ENCODE measurements at regions of chr18 and their contacts with region 1.

Region 1: DNA sequence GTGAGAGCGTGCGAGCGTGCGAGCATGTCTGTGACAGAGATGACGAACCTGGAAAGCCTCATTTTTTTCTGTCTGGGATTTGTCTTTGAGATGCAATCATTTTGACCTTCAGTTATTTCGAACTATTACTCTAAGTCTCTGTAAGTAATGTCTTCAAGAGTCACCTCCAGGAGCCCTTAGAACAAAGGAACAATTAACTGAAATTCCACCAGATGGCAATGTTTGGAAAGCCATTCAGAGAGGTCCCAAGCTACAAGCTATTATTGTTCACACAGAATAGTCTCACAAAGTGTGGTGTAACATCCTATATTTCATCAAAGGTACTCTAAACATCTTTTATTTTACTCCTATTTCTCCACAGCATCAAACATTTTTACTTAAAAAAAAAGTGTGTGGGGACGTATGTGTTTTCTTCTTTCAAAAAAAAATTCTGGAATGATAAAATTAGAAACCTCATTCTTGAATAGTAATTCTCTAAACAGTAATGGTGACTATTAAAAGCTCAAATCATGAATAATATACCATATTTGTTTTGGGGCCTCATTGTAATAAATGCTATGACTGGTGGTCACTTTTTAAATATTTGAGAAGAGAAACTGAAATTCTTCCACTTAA is 35.1 kb upstream of the MAPRE2 start:
- DNase-seq: peak; percentile 60
- H3K4me3 ChIP-seq: no peak overlapping the region
- H3K27ac ChIP-seq: no peak overlapping the region
- H3K4me1 ChIP-seq: no peaks in the 10 kb centered on the region; a peak in 1 of 4 replicates
- H3K27me3 ChIP-seq: no peaks in the 10 kb centered on the region
- CTCF ChIP-seq: peak; percentile 75
- EP300 ChIP-seq: no peak
- RAD21 ChIP-seq: peak; percentile 95

Region 2: DNA sequence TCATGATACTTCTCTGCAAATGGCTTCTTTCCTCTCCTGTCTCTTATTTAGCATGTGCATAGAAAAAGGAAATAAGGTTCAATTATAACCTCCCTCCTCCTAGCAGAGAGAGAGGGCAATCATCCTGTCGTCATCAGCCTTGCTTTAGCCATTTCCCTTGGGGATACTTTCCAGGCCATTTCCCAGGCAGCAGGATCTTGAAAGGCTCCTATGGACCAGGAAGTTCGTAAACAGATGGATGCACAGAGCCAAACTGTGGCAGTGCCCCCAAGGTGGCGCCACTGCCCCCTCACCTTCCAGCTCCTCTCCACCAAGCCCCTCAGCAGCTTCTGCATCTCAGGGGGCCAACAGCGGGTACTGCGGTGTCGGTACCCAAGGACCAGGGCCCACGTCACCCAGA is 138.6 kb before region 1 on chr18:
- CTCF ChIA-PET with region 1: interaction called, 10 read pairs
- POLR2A ChIA-PET with region 1: no interaction called
- DNase-seq: peak; percentile 57
- H3K4me3 ChIP-seq: no peak overlapping the region; a peak in 1 of 4 replicates
- H3K27ac ChIP-seq: no peak overlapping the region
- H3K4me1 ChIP-seq: peaks cover 0 to 4% of the 10 kb centered on the region in 2 experiments; a peak in 2 of 4 replicates
- H3K27me3 ChIP-seq: no peaks in the 10 kb centered on the region
- CTCF ChIP-seq: peak; percentile 39
- EP300 ChIP-seq: no peak
- RAD21 ChIP-seq: peak; percentile 29

Region 3: DNA sequence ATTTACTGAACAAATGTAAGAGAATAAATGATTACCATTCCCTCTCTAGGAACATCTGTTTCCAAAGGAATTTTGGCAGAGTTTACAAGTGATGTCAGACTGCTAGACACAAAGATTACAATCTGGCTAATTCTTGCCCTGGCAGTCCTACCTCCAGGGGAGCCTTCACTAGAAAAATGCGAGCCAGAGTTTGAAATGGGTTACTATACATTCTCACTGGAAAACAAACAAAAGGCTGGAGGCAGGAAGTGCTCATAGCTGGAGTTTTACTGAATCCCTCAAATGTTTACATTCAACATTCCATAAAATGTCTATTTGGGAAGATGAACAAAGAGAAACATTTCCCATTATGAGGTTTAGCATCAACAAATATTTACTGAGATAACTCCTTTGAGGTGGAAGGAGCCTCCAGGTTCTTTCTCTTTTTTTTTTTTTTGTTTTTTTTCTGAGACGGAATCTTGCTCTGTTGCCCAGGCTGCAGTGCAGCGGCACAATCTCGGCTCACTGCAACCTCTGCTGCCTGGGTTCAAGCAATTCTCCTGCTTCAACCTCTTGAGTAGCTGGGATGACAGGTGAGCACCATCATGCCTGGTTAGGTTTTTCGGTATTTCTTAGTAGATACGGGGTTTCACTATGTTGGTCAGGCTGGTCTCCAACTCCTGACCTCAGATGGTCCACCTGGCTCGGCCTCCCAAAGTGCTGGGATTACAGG is 93.9 kb before region 1 on chr18:
- CTCF ChIA-PET with region 1: no interaction called
- POLR2A ChIA-PET with region 1: no interaction called
- DNase-seq: peak; percentile 41
- H3K4me3 ChIP-seq: no peak overlapping the region
- H3K27ac ChIP-seq: peak overlapping the region in 1 of 2 experiments; percentile 62; a peak in 2 of 4 replicates
- H3K4me1 ChIP-seq: no peaks in the 10 kb centered on the region; a peak in 2 of 4 replicates
- H3K27me3 ChIP-seq: no peaks in the 10 kb centered on the region
- CTCF ChIP-seq: peak; percentile 24; the same call in 1 of the 2 replicates
- EP300 ChIP-seq: peak; percentile 35 to 81; a peak in 2 of 4 replicates
- RAD21 ChIP-seq: no peak

Region 4: DNA sequence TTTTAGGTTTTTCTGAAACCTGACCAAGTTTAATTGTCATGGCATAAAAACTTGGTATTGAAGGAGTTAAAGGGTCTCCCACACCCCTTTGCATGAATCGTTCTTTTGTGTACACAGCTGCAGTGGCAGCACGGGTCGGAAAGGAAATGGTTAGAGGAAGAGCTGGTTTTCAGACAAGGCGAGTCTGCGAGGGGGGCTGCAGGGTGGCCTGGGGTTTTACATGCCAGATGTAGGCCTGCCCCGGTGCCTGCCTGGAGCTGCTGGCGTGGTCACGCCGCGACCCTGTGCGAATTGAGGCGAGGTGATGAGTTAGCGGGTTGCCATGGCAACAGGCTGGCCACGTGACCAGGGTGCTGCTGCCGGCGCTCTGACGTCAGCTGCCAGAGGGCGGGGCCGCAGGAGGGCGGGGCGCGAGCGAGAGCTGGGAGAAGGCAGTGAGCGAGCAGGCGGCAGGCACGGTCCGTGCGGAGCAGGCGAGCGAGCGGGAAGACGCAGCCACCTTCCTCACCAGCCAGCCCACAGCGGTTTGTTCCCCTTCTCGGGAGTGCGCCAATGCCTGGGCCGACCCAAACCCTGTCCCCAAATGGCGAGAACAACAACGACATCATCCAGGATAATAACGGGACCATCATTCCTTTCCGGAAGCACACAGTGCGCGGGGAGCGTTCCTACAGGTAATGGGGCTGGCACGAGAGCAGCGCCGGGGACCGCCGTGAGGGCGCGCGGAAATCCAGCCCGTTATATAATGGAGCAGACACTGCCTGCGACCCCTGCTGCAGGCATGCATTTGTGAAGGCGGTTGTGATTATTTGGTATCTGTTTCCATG is 35.1 kb after region 1 on chr18 and contains the start of gene MAPRE2:
- CTCF ChIA-PET with region 1: interaction called, 12 read pairs
- POLR2A ChIA-PET with region 1: no interaction called
- DNase-seq: peak; percentile 95
- H3K4me3 ChIP-seq: peak within 1 kb of the TSS; percentile 67 to 99
- H3K27ac ChIP-seq: peak within 1 kb of the TSS; percentile 79 to 98
- H3K4me1 ChIP-seq: peaks cover 20 to 25% of the 10 kb centered on the region in 2 experiments; a peak in 3 of 4 replicates
- H3K27me3 ChIP-seq: no peaks in the 10 kb centered on the region
- CTCF ChIP-seq: no peak; the same call in 1 of the 2 replicates
- EP300 ChIP-seq: peak in 1 of 2 experiments; percentile 51; a peak in 1 of 4 replicates
- RAD21 ChIP-seq: peak; percentile 29
- polyA plus RNA-seq, gene MAPRE2: 11.5 and 14.1 TPM in 2 replicates

Region 5: GRCh38 chr18:35122586-35123224 is 116.6 kb after region 1 on chr18:
- CTCF ChIA-PET with region 1: interaction called, 10 read pairs
- POLR2A ChIA-PET with region 1: no interaction called
- DNase-seq: peak; percentile 65
- H3K4me3 ChIP-seq: no peak overlapping the region; a peak in 1 of 4 replicates
- H3K27ac ChIP-seq: peak overlapping the region in 1 of 2 experiments; percentile 74; a peak in 2 of 4 replicates
- H3K4me1 ChIP-seq: peaks cover 4 to 27% of the 10 kb centered on the region in 2 experiments; a peak in 3 of 4 replicates
- H3K27me3 ChIP-seq: no peaks in the 10 kb centered on the region
- CTCF ChIP-seq: peak; percentile 35
- EP300 ChIP-seq: no peak
- RAD21 ChIP-seq: no peak; the same call in 1 of the 2 replicates